Psoas muscle (tissue), 8 donors: ENCODE measurements at regions of chr1 and their contacts with region 1.

Region 1: DNA sequence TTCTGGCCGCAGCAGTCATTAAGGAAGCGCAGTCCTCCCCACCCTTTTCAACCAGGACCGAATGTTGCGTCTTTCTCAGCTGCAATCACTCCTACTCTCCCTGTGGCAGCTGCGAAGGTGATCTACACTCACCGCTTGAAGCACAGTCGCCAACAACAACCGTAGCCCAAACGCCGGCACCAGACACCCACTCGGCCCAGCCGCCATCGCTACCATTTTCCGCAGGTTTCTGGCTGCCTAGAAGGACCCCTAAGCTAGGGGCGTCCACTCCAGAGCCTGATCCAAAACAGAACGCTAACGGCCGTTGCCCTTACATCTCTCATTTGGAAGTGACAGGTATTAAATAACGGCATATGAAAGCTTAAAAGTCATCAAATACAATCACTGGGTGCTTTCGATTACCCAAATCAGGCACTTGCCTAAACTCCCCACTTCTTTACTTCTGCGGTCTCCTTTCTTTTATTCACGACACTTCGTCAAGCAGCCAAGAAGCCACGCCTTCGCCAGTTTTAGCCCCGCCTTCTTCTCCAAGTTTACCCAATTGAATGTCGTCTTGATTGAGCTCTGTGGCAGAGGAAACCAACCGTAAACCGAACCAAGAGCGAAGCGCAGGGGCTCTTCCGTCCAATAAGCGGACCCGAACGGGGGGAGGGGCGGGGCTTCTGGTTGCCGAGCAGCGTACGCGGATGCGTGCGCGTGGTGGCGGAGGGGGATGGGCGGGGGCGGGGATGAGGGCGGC is at the start of gene SELENOF:
- DNase-seq: peak; percentile 99
- ATAC-seq: peak; percentile 92 to 99 (median 98)
- H3K4me3 ChIP-seq: peak within 1 kb of the TSS; percentile 93
- H3K27ac ChIP-seq: peak within 1 kb of the TSS; percentile 98
- H3K4me1 ChIP-seq: peaks cover 19% of the 10 kb centered on the region
- H3K27me3 ChIP-seq: no peaks in the 10 kb centered on the region
- CTCF ChIP-seq: peak; percentile 3
- total RNA-seq, gene SELENOF: 56.4 to 67.6 (median 61.0) TPM

Region 2: GRCh38 chr1:86704458-86704971 is 209.6 kb before region 1 on chr1 and contains the start of gene SH3GLB1:
- intact Hi-C with region 1: loop called in 1 of 2 experiments (anchors 5 kb)
- DNase-seq: peak; percentile 91 to 95
- ATAC-seq: peak; percentile 86 to 89 (median 88)
- H3K4me3 ChIP-seq: peak within 1 kb of the TSS; percentile 93
- H3K27ac ChIP-seq: peak within 1 kb of the TSS; percentile 99
- H3K4me1 ChIP-seq: peaks cover 27% of the 10 kb centered on the region
- H3K27me3 ChIP-seq: no peaks in the 10 kb centered on the region
- CTCF ChIP-seq: peak; percentile 90
- total RNA-seq, gene SH3GLB1: 158 to 315 (median 198) TPM

Region 3: DNA sequence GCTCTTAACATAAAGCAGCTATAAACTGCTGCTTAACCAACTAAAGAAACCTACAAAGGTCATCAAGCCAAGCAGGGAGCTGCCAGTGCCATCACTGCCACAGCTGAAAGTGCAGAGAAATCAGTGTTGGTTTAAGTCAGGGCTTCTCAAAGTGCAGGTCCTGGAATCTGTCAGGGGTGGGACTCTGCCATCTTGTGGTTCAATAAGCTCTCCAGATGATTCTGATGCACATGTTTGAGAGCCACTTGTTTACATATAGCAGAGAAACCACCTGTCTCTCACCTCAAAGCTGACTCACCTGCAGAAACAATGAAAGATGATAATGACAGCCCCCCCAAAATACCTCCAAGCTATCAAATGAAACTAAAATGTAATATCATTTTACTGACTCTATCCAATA is 160.4 kb before region 1 on chr1:
- intact Hi-C with region 1: no loop called
- DNase-seq: no peak
- ATAC-seq: no peak
- H3K4me3 ChIP-seq: no peak overlapping the region
- H3K27ac ChIP-seq: no peak overlapping the region
- H3K4me1 ChIP-seq: peaks cover 16% of the 10 kb centered on the region
- H3K27me3 ChIP-seq: no peaks in the 10 kb centered on the region
- CTCF ChIP-seq: peak; percentile 13

Region 4: GRCh38 chr1:86788300-86789206 is 125.5 kb before region 1 on chr1:
- intact Hi-C with region 1: loop called in 1 of 2 experiments (anchors 10 kb)
- DNase-seq: peak; percentile 46 to 72
- ATAC-seq: peak; percentile 84 to 91 (median 89)
- H3K4me3 ChIP-seq: no peak overlapping the region
- H3K27ac ChIP-seq: peak overlapping the region; percentile 79
- H3K4me1 ChIP-seq: peaks cover 20% of the 10 kb centered on the region
- H3K27me3 ChIP-seq: no peaks in the 10 kb centered on the region
- CTCF ChIP-seq: no peak

Region 5: GRCh38 chr1:86852782-86853408 is 61.2 kb before region 1 on chr1:
- intact Hi-C with region 1: no loop called
- DNase-seq: no peak
- ATAC-seq: no peak
- H3K4me3 ChIP-seq: no peak overlapping the region
- H3K27ac ChIP-seq: no peak overlapping the region
- H3K4me1 ChIP-seq: no peaks in the 10 kb centered on the region
- H3K27me3 ChIP-seq: no peaks in the 10 kb centered on the region
- CTCF ChIP-seq: no peak

Region 6: DNA sequence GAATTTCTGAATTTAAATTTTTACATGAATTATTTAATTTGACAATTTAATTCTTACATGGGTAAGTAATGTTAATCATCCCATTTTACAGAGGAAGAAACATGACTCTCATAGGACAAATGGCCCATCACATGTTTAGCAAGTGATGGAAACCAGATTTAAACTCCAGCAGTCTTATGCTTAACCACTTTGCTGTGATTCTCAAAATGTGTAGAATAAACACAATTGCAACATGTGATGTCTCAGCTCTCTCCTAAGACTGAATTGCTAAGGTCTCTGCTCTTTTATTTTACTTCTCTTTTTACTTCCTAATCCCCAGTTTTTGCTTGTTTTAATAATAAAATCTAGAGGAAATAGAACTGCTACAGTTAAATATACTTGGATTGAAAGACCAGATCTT is 43.2 kb after region 1 on chr1:
- intact Hi-C with region 1: loop called in 1 of 2 experiments (anchors 5 kb)
- DNase-seq: no peak
- ATAC-seq: no peak
- H3K4me3 ChIP-seq: no peak overlapping the region
- H3K27ac ChIP-seq: no peak overlapping the region
- H3K4me1 ChIP-seq: no peaks in the 10 kb centered on the region
- H3K27me3 ChIP-seq: no peaks in the 10 kb centered on the region
- CTCF ChIP-seq: no peak

Region 7: DNA sequence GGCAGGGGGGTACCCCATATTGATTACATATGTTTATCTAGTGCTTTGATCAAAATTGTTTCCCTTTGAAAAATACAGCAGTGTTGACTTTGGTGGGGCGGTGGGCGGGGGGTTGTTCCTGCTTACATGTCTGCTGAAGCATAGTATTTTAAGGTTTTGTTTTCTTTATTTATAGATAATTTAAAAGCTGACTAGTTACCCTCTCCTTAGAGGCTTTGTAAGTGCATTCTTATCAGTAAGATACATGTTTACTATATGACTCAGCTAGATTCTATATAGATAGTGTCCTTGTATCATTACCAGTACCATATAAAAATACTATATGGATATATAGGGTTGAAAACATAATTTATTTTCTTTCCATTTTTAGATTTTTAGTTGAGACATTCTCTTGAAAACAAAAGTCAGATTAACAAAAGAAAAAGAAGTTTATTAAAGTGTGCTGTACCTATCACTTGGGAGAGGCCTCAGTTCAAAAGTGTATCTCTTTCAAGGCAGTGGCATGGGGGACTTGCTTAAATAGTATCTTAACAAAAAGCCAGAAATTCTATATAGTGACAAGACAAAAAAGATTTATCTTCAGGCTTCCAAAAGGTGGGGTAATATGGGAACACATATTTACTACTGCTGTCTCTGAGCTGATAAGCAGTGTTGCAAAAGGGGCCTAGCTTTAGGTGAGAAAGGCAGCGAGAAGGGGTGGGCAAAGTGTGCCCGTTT is 79.4 kb after region 1 on chr1:
- intact Hi-C with region 1: no loop called
- DNase-seq: no peak
- ATAC-seq: no peak
- H3K4me3 ChIP-seq: no peak overlapping the region
- H3K27ac ChIP-seq: no peak overlapping the region
- H3K4me1 ChIP-seq: peaks cover 9% of the 10 kb centered on the region
- H3K27me3 ChIP-seq: no peaks in the 10 kb centered on the region
- CTCF ChIP-seq: no peak

Region 8: GRCh38 chr1:87279966-87280535 is 366.0 kb after region 1 on chr1:
- intact Hi-C with region 1: no loop called
- DNase-seq: no peak
- ATAC-seq: no peak
- H3K4me3 ChIP-seq: no peak overlapping the region
- H3K27ac ChIP-seq: no peak overlapping the region
- H3K4me1 ChIP-seq: no peaks in the 10 kb centered on the region
- H3K27me3 ChIP-seq: no peaks in the 10 kb centered on the region
- CTCF ChIP-seq: no peak

Region 9: DNA sequence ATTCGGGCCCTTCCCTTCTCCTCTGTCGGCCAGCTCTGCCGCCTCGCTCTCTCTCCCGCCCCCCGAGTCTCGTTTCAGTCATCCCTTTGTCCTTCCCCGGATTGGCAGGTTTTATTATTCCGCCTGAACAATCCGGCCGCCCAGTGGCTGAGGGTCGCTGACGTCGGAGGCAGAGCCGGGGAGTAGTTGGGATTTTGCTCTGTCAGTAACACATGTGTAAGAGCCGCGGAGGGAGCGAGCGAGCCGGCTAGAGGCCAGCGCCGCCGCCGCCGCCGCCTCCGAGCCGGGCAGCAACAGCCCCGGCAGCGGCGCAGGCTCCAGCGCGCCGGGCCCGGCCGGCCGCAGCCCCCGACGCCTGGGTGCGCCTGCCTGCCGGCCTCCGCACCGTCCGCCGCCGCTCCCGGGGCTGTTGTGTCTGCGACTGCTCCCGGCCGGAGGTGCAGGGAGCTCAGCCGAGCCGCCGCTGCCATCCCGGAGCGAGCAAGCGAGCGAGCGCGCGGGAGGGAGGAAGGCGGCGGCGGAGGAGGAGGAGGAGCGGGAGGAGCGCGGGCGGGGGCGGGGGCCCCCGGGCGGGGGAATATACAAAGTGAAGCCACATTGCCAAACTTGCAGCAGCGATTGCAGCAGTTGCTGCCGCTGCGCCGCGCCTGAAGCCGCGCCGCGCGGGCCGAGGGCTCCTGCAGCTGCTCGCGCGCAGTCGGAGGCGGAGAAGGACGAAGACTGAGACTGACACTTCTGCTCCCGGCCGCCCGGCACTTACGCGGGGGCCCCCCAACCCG is 414.4 kb after region 1 on chr1 and contains the start of gene LMO4:
- intact Hi-C with region 1: loop called in 1 of 2 experiments (anchors 5 kb)
- DNase-seq: peak; percentile 96 to 97
- ATAC-seq: peak; percentile 86 to 95 (median 92)
- H3K4me3 ChIP-seq: peak within 1 kb of the TSS; percentile 71
- H3K27ac ChIP-seq: peak within 1 kb of the TSS; percentile 92
- H3K4me1 ChIP-seq: peaks cover 14% of the 10 kb centered on the region
- H3K27me3 ChIP-seq: no peaks in the 10 kb centered on the region
- CTCF ChIP-seq: no peak
- total RNA-seq, gene LMO4: 25.2 to 32.3 (median 28.3) TPM